ENCODE measurements at regions of chr2 and their contacts with region 1.

Region 1: DNA sequence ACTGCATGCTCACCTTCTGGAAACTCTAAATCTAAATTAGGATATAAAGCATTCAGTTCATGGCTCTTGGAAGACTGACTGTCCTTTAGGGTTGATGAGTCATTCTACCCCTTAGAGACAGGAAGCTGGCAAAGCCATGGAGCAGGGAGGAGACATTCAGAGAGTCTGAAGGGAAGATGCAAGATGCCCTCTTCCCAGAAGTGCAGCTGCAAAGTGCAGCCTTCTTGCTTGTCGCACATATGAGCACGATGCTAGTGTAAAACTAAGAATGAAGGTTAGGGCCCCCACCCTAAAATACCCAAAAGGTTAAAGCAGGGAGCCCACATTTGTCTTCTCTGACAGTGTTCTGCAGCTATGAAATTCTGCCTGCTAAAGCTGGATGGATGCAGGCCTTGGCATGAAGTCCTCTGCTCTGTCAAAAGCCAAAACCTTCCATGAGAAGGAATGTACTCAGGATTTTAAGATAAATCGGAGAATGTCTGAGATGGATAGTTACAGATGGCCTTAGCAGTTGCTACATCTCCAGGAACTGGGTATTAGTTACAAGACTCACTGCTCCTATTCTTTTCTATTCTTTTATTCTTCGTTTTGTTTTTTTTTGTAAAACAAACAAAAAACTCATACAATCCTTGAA is 89.7 kb downstream of the POLE4 start:
- DNase-seq: no peak
- CTCF ChIP-seq: no peak

Region 2: GRCh38 chr2:74690571-74690970 is 357.5 kb before region 1 on chr2:
- in situ Hi-C with region 1: loop called (anchors 25 kb)
- DNase-seq: peak; percentile 75
- CTCF ChIP-seq: peak; percentile 49

Region 3: GRCh38 chr2:75130171-75130570 is 82.1 kb after region 1 on chr2:
- in situ Hi-C with region 1: no loop called
- DNase-seq: no peak
- CTCF ChIP-seq: no peak